Activated CD4-positive, alpha-beta memory T cell treated with anti-CD3 and anti-CD28 coated beads, Interleukin-2, amount 10 ng/mL, durations not matched to agents 7 days and 5 days (primary cell): ENCODE measurements at regions of chr11 and their contacts with region 1.

Region 1: GRCh38 chr11:119205574-119206510 is at the start of gene CBL:
- DNase-seq: peak; percentile 97
- H3K4me3 Mint-ChIP-seq: peak within 1 kb of the TSS; percentile 94
- H3K27ac Mint-ChIP-seq: peak within 1 kb of the TSS; percentile 79
- H3K4me1 Mint-ChIP-seq: peaks cover 34% of the 10 kb centered on the region
- H3K27me3 Mint-ChIP-seq: no peaks in the 10 kb centered on the region
- total RNA-seq, gene CBL: 45.0 to 47.0 TPM

Region 2: DNA sequence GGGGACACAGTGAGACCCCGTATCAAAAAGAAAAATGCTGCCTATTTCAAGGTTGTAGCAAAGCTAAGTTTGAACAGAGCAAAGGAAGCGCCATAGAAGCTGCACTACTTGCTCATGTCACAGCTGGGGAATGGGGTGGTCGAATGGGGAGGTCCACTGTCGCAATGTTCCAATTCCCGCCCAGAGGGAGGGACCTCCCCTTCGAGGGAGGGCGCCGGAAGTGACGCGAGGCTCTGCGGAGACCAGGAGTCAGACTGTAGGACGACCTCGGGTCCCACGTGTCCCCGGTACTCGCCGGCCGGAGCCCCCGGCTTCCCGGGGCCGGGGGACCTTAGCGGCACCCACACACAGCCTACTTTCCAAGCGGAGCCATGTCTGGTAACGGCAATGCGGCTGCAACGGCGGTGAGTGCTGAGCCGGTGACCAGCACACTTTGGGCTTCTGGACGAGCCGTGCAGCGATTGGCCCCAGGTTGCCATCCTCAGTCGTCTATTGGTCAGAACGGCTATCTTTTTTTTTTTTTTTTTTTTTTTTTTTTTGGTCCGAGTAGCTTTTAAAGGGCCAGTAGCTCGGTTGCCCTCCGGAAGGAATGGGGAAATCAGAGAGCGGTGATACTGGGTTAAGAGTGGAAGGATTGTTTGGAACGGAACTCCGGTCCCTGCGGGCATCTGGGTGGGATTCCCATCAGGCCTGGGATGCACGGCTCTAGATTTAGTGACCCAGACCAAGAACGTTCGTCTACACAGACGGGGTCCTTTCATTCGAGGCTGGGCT is 121.0 kb before region 1 on chr11 and contains the start of gene HMBS:
- CTCF ChIA-PET with region 1: interaction called, 9 read pairs
- POLR2A ChIA-PET with region 1: interaction called, 10 read pairs
- DNase-seq: peak; percentile 89
- H3K4me3 Mint-ChIP-seq: peak within 1 kb of the TSS; percentile 98
- H3K27ac Mint-ChIP-seq: peak within 1 kb of the TSS; percentile 91
- H3K4me1 Mint-ChIP-seq: peaks cover 47% of the 10 kb centered on the region
- H3K27me3 Mint-ChIP-seq: no peaks in the 10 kb centered on the region
- total RNA-seq, gene HMBS: 17.3 to 18.8 TPM

Region 3: DNA sequence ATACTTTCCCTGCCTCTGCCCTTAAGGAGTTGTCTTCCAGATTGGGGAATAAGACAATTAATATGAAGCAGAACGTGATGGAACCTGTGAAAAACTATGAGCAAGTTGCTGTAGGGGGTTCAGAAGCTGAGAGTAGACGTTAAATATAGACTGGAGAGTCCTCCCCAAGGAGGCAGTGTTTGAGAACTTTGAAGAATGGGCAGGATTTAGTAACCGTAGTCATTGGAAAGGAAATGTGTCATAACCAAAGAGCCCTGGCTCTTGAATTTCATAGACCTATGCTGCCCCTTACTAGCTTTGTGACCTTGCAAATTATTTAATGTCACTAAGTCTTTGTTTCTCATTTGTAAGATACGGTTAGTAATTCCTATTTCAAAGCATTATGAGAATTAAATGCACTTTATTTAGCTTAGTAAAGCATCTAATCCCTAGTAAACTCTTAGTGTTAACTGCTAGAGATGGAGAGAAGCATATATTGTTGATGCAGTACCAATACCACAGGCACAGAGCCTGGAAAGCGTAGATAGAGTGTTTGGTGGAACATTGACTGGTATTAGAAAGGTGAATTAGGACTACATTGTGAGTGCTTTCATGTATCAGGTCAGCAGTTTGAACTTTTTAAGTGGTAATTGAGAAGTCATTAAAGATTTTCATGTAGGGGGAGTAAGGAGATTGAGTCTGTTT is 57.0 kb after region 1 on chr11:
- CTCF ChIA-PET with region 1: interaction called, 43 read pairs
- POLR2A ChIA-PET with region 1: interaction called, 41 read pairs
- DNase-seq: peak; percentile 19
- H3K4me3 Mint-ChIP-seq: no peak overlapping the region
- H3K27ac Mint-ChIP-seq: no peak overlapping the region
- H3K4me1 Mint-ChIP-seq: peaks cover 56% of the 10 kb centered on the region
- H3K27me3 Mint-ChIP-seq: no peaks in the 10 kb centered on the region

Region 4: DNA sequence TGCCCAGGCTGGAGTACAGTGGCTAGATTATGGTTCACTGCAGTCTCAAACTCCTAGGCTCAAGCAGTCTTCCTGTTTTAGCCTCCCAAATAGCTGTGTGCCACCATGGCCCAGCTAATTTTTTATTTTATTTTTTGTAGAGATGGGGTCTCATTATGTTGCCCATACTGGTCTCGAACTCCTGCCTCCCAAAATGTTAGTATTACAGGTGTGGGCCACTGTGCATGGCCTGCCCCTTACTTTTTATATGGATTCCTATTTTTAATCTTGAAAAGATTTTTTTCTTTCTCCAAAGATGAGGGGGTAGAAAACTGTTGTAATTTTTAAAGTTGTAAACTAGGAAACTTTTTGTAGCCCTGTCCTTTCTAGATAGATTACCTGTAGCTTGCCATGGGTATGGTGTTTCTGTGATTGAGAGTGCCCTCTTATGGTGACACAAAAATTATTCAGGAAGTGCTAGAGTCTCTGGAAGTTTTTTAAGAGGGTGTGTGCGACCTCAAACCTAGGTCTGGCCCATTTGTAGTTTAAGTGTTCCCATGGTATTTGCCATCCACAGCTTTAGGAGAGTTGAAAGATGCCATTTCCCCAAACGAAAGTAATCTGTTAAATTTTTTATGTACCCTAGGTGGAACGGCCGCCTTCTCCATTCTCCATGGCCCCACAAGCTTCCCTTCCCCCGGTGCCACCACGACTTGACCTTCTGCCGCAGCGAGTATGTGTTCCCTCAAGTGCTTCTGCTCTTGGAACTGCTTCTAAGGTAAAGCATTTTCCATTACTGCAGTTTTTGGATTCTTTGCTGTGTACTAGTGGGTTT is 78.7 kb after region 1 on chr11:
- CTCF ChIA-PET with region 1: interaction called, 74 read pairs
- POLR2A ChIA-PET with region 1: interaction called, 25 read pairs
- DNase-seq: no peak
- H3K4me3 Mint-ChIP-seq: no peak overlapping the region
- H3K27ac Mint-ChIP-seq: peak overlapping the region; percentile 12
- H3K4me1 Mint-ChIP-seq: peaks cover 28% of the 10 kb centered on the region
- H3K27me3 Mint-ChIP-seq: no peaks in the 10 kb centered on the region

Region 5: GRCh38 chr11:119315131-119316015 is 109.5 kb after region 1 on chr11:
- CTCF ChIA-PET with region 1: interaction called, 61 read pairs
- POLR2A ChIA-PET with region 1: interaction called, 22 read pairs
- DNase-seq: peak; percentile 51
- H3K4me3 Mint-ChIP-seq: peak overlapping the region; percentile 58
- H3K27ac Mint-ChIP-seq: peak overlapping the region; percentile 24
- H3K4me1 Mint-ChIP-seq: peaks cover 44% of the 10 kb centered on the region
- H3K27me3 Mint-ChIP-seq: peaks cover 34% of the 10 kb centered on the region

Region 6: GRCh38 chr11:119334174-119334930 is 128.5 kb after region 1 on chr11 and contains the start of gene RNF26:
- CTCF ChIA-PET with region 1: interaction called, 19 read pairs
- POLR2A ChIA-PET with region 1: interaction called, 4 read pairs
- DNase-seq: peak; percentile 96
- H3K4me3 Mint-ChIP-seq: peak within 1 kb of the TSS; percentile 100
- H3K27ac Mint-ChIP-seq: peak within 1 kb of the TSS; percentile 94
- H3K4me1 Mint-ChIP-seq: peaks cover 60% of the 10 kb centered on the region
- H3K27me3 Mint-ChIP-seq: peaks cover 19% of the 10 kb centered on the region
- total RNA-seq, gene RNF26: 33.5 to 35.1 TPM